Colonic mucosa (tissue), 4 donors: ENCODE measurements at regions of chr5 and their contacts with region 1.

Region 1: GRCh38 chr5:135887351-135887864 is 8.2 kb downstream of the IL9 start:
- DNase-seq: peak; percentile 66
- H3K4me3 ChIP-seq: no peak overlapping the region
- H3K27ac ChIP-seq: no peak overlapping the region
- H3K4me1 ChIP-seq: no peaks in the 10 kb centered on the region
- H3K27me3 ChIP-seq: no peaks in the 10 kb centered on the region
- CTCF ChIP-seq: peak; percentile 81

Region 2: DNA sequence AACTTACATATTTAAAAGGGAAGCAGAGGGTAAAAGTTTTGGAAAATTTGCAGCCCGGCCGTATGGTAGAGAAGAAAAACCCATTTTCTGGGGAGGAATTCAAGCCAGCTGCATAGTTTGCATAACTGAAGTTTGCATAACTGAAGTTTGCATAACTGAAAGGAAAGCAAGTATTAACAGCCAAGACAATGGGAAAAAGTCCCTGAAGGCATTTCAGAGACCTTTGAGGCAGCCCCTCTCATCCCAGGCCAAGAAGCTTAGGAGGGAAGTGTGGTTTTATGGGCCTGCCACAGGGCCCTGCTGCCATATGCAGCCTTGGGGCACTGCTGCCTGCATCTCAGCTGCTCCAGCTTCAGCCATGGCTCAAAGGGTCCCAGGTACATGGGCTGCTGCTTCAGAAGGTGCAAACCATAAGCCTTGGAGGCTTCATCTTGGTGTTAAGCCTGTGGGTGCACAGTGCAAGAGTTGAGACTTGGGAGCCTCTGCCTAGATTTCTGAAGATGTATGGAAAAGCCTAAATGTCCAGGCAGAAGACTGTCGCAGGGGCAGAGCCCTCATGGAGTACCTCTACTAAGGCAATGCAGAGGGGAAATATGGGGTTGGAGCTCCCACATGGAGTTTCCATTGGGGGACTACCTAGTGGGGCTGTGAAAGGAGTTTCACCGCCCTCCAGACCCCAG is 271.7 kb before region 1 on chr5:
- intact Hi-C with region 1: no loop called
- DNase-seq: no peak
- H3K4me3 ChIP-seq: no peak overlapping the region
- H3K27ac ChIP-seq: no peak overlapping the region
- H3K4me1 ChIP-seq: no peaks in the 10 kb centered on the region
- H3K27me3 ChIP-seq: no peaks in the 10 kb centered on the region
- CTCF ChIP-seq: no peak

Region 3: DNA sequence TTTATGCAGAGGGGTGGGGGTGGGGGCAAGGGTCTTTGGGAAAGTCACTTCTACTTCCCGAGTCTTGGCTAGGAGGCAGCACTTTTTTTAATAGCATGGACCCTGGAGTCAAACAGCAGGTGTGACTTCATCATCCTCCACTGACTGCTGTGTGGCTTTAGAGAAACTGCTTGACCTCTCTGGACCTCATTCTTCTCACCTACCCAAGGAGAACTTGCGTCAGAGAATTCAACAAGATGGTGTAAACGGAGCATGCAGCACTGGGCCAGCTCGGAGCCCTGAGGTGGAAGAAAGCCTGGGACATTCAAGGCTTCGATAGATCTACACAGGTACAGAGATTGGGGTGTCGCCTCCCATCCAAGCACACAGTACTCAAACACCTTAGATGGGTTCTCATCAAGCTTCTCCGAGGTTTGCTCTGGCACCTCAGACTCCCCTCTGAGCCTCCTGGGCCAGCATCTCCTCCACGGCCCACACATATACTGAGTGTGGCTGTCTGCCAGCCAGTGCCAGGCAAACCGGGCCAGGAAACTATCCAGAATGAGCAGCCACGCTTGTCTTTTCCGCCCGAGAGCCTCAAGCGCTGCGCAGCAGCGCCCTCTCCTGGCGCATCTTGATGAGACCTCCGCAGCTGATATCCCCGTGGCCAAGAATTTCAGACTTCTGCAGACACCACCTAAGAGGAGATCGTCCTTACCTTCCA is 57.6 kb before region 1 on chr5:
- intact Hi-C with region 1: no loop called
- DNase-seq: peak; percentile 79
- H3K4me3 ChIP-seq: no peak overlapping the region
- H3K27ac ChIP-seq: no peak overlapping the region
- H3K4me1 ChIP-seq: no peaks in the 10 kb centered on the region
- H3K27me3 ChIP-seq: peaks cover 11% of the 10 kb centered on the region
- CTCF ChIP-seq: peak; percentile 71

Region 4: DNA sequence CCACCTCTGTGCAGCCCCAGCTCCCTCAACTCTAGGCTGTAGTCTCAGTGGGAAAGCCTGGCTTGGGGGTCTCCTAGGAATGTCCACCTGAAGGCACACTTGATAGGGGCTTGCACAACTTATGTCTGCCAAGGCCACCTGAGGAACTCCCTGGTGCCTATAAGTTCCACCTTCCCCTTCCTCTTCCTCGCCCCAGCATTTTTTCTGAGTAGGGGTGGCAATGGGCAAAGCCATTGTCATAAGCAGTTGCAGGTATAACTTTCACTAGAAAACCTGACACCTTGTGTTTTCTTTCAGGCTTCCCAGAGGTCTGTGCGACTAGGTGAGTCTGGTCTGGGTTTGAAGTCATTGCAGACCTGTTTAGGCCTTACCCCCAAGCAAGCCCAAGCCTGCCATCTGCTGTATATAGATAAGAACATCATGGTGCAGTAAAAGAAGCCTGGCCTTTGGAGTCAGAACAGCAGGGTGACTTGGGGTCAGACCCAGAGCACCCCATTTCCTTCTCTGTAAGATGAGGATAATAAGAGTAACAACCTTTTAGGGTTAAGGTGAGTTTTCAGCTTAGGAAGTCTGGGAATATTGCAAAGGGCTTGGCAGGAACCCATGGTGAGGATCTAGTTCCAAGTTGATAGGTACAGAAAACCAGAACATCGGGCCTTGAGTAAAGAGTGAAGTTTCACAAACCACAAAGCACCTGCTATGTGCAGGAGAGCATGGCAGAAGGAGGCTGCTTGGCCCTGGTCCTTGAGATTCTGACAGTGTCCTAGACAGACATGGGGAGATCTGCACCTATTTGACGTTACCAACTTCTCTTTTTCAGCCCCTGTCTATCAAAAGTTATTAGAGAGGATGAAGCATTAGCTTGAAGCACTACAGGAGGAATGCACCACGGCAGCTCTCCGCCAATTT is 175.2 kb after region 1 on chr5:
- intact Hi-C with region 1: loop called (anchors 5 kb)
- DNase-seq: no peak
- H3K4me3 ChIP-seq: no peak overlapping the region
- H3K27ac ChIP-seq: no peak overlapping the region
- H3K4me1 ChIP-seq: no peaks in the 10 kb centered on the region
- H3K27me3 ChIP-seq: no peaks in the 10 kb centered on the region
- CTCF ChIP-seq: peak; percentile 47

Region 5: DNA sequence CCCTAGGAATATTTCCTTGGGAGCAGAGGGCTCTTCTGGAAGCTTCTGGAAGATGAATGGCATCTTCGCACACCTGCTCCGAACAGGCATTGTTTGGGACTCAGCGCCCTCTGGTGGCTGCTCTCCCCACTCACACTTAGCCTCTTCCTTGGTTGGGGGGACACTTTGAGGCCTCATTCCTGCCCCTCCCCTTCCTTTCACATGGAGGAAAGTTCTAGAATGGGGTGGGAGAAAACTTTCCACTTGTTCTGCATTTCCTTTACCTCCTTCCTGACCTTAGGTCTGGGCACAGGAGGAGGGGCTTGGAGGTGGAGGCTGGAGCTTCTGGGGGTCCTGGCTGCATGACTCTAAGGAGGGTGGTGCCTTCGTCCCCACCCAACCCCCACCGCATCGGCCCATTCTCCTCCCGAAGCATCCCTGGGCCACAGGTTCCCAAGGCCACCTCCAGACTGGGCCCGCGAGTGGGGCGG is 324.9 kb after region 1 on chr5:
- intact Hi-C with region 1: loop called (anchors 5 kb)
- DNase-seq: peak; percentile 77
- H3K4me3 ChIP-seq: no peak overlapping the region
- H3K27ac ChIP-seq: no peak overlapping the region
- H3K4me1 ChIP-seq: no peaks in the 10 kb centered on the region
- H3K27me3 ChIP-seq: no peaks in the 10 kb centered on the region
- CTCF ChIP-seq: peak; percentile 85

Region 6: GRCh38 chr5:136424835-136425584 is 537.6 kb after region 1 on chr5:
- intact Hi-C with region 1: loop called (anchors 10 kb)
- DNase-seq: peak; percentile 82
- H3K4me3 ChIP-seq: no peak overlapping the region
- H3K27ac ChIP-seq: no peak overlapping the region
- H3K4me1 ChIP-seq: no peaks in the 10 kb centered on the region
- H3K27me3 ChIP-seq: no peaks in the 10 kb centered on the region
- CTCF ChIP-seq: peak; percentile 59